ENCODE measurements at regions of chr7 and their contacts with region 1.

Region 1: DNA sequence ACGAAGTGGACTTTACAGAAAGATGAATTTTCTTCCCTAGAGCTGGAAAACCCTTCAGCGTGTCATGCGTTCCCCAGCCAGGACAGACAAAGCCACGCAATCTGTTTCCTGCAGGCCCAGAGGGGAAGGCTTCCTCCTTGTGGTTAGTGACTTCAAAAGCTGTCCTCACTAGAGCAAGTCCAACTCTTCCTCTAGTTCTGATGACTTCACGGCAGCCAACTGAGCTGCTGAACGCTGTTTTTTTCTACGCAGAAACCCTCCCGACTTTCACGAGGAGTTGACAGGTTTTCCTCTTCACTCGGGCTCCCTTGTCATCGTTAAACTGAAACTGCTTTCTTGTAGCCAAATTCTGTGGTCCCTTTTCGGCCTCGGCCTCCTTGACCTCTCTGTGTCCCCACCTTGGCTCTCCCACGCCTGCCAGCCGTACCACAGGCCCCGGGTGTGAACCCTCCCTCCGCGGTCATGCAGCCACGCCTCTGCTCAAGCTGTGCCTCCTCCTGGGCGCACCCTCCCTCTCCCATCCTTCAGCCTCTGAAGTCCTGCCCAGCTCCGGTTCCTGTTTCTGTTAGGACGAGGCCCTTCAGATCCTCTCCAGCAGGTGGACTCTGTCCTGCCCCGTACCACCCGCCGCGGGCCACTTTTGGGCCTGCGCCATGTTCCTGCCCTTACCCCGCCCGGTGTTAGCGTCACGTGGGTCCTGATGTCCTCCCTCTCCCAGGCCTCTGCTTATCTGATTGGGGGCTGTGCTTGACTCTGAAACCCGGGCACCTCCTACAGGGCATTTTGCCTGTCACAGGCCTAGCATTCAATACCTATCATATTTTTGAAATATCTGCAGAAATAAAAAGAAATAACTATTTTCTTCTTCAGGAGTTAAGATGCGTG is 39.3 kb downstream of the CUX1 start:
- DNase-seq: peak; percentile 95
- ATAC-seq: peak; percentile 96
- H3K4me3 ChIP-seq: peak overlapping the region; percentile 33; the same call in 1 of the 2 replicates
- H3K27ac ChIP-seq: peak overlapping the region; percentile 84
- H3K4me1 ChIP-seq: peaks cover 47% of the 10 kb centered on the region
- H3K27me3 ChIP-seq: no peaks in the 10 kb centered on the region
- CTCF ChIP-seq: peak; percentile 31 to 53 (median 39); a peak in 5 of 6 replicates
- EP300 ChIP-seq: peak in 1 of 2 experiments; percentile 72; a peak in 1 of 4 replicates
- POLR2A ChIP-seq: peak; percentile 58
- RAD21 ChIP-seq: peak; percentile 29; the same call in 1 of the 2 replicates

Region 2: DNA sequence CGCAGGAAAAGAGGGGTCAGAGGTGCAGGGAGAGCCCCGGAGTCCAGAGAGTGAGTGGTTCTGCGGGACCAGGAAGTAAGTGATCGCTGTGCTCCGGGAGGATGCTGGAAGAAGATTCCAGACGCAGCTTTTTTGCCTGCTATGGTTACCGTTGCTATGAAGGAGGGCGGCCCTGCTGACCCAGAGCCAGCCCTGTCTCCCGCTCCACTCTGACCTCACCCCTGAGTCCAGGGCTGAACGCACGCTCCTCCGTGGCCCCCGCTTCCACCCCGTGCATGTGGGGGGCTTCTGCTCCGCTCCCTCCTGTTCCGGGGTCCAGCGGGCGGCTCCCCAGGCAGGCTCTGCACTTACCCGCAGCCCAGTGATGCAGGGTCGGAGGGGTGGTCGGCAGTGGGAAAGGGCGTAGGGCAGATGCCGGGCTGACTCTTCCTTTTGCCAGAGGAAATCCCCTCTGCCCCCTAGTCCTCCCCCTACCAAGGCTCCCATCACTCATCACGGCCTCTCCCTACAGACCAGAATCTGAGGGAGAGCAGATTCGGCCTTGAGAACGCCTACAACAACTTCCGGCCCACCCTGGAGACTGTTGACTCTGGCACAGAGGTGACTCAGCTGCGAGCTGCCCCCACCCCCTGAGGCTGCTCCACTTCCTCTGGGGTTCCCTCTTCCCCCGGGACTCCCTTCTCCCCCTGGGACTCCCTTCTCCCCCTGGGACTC is 839.5 kb before region 1 on chr7:
- CTCF ChIA-PET with region 1: no interaction called
- POLR2A ChIA-PET with region 1: no interaction called
- RAD21 ChIA-PET with region 1: no interaction called
- SMC1A ChIA-PET with region 1: no interaction called
- in situ Hi-C with region 1: no loop called
- intact Hi-C with region 1: no loop called
- DNase-seq: peak; percentile 36
- ATAC-seq: peak; percentile 92
- H3K4me3 ChIP-seq: peak overlapping the region; percentile 95
- H3K27ac ChIP-seq: peak overlapping the region; percentile 91
- H3K4me1 ChIP-seq: peaks cover 15% of the 10 kb centered on the region
- H3K27me3 ChIP-seq: no peaks in the 10 kb centered on the region
- CTCF ChIP-seq: no peak
- EP300 ChIP-seq: no peak
- POLR2A ChIP-seq: peak; percentile 72
- RAD21 ChIP-seq: no peak

Region 3: GRCh38 chr7:101688183-101688831 is 168.4 kb before region 1 on chr7:
- CTCF ChIA-PET with region 1: no interaction called
- POLR2A ChIA-PET with region 1: no interaction called
- RAD21 ChIA-PET with region 1: no interaction called
- SMC1A ChIA-PET with region 1: no interaction called
- in situ Hi-C with region 1: no loop called
- intact Hi-C with region 1: loop called (anchors 1 kb)
- DNase-seq: no peak
- ATAC-seq: peak; percentile 97
- H3K4me3 ChIP-seq: peak overlapping the region; percentile 32; the same call in 1 of the 2 replicates
- H3K27ac ChIP-seq: peak overlapping the region; percentile 58
- H3K4me1 ChIP-seq: peaks cover 6% of the 10 kb centered on the region; the same call in 1 of the 2 replicates
- H3K27me3 ChIP-seq: no peaks in the 10 kb centered on the region
- CTCF ChIP-seq: peak; percentile 73 to 97 (median 79)
- EP300 ChIP-seq: no peak
- POLR2A ChIP-seq: no peak
- RAD21 ChIP-seq: peak; percentile 89

Region 4: DNA sequence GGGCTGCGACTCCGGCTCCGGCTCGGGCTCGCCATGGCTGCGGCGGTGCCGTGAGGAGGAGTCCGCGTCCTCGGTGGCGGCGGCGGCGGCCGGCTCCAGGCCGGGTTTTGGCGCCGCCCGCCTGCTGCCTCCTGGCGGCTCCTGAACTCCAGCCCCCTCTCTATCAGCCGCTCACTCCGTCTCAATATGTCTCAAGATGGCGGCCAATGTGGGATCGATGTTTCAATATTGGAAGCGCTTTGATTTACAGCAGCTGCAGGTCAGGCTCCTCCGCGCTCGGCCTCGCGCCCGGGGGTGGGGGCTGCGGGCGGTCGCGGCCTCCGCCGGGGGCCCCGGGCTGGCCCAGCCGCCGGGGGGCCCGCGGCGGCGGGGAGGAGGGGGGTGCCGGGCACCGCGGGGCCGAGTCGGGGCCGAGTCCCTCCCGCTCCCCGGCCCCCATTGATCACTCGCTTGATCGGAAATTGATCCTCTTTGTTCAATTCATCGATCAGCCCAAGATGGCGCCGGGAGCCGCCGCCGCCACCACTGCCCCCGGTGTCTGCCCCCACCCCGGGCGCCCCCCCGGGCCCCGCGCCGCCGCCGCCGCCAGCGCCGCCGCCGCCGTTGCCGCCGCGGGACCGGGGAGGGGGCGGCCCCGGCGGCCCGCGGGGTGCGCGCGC is 40.8 kb before region 1 on chr7:
- CTCF ChIA-PET with region 1: interaction called, 14 read pairs
- POLR2A ChIA-PET with region 1: interaction called, 3 read pairs
- RAD21 ChIA-PET with region 1: interaction called, 17 read pairs
- SMC1A ChIA-PET with region 1: interaction called, 27 read pairs
- in situ Hi-C with region 1: no loop called
- intact Hi-C with region 1: loop called (anchors 2 kb)
- DNase-seq: no peak
- ATAC-seq: peak; percentile 63
- H3K4me3 ChIP-seq: peak overlapping the region; percentile 53; the same call in 1 of the 2 replicates
- H3K27ac ChIP-seq: peak overlapping the region; percentile 68
- H3K4me1 ChIP-seq: peaks cover 4% of the 10 kb centered on the region; the same call in 1 of the 2 replicates
- H3K27me3 ChIP-seq: no peaks in the 10 kb centered on the region
- CTCF ChIP-seq: peak in 1 of 3 experiments; percentile 19; a peak in 2 of 6 replicates
- EP300 ChIP-seq: no peak
- POLR2A ChIP-seq: peak; percentile 69
- RAD21 ChIP-seq: no peak

Region 5: GRCh38 chr7:101941481-101942383 is 85.0 kb after region 1 on chr7:
- CTCF ChIA-PET with region 1: interaction called, 4 read pairs
- POLR2A ChIA-PET with region 1: interaction called, 3 read pairs
- RAD21 ChIA-PET with region 1: interaction called, 3 read pairs
- SMC1A ChIA-PET with region 1: interaction called, 12 read pairs
- in situ Hi-C with region 1: no loop called
- intact Hi-C with region 1: no loop called
- DNase-seq: no peak
- ATAC-seq: peak; percentile 27
- H3K4me3 ChIP-seq: no peak overlapping the region
- H3K27ac ChIP-seq: peak overlapping the region; percentile 1; the same call in 1 of the 2 replicates
- H3K4me1 ChIP-seq: peaks cover 38% of the 10 kb centered on the region
- H3K27me3 ChIP-seq: no peaks in the 10 kb centered on the region
- CTCF ChIP-seq: no peak
- EP300 ChIP-seq: no peak
- POLR2A ChIP-seq: no peak
- RAD21 ChIP-seq: 0 out of 2 replicates have a peak, but pooled peaks have one; percentile 2

Region 6: DNA sequence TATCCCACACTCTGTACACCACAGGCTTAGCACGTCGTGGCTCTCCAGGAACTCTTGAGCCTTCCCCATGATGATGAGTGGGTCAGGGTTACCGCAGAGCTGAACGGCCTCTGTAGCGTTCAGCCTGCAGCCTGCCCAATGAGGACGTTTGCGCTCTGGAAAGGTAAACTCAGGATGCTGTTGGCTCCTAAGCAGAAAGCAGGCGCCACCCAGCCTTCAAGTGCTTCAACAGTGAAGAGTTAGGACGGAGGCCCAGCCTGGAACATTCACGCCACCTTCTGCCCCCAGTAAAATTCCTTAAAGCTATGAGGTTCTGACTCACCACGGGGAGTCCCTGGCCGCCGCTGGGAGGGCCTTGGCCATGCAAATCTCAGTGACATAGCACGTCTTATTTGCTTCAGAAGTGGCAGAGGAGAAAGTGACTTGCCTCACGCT is 268.4 kb after region 1 on chr7:
- CTCF ChIA-PET with region 1: interaction called, 5 read pairs
- POLR2A ChIA-PET with region 1: interaction called, 3 read pairs
- RAD21 ChIA-PET with region 1: interaction called, 4 read pairs
- SMC1A ChIA-PET with region 1: interaction called, 6 read pairs
- in situ Hi-C with region 1: no loop called
- intact Hi-C with region 1: loop called (anchors 10 kb)
- DNase-seq: peak; percentile 51
- ATAC-seq: peak; percentile 94
- H3K4me3 ChIP-seq: no peak overlapping the region
- H3K27ac ChIP-seq: peak overlapping the region; percentile 4; the same call in 1 of the 2 replicates
- H3K4me1 ChIP-seq: peaks cover 26% of the 10 kb centered on the region
- H3K27me3 ChIP-seq: no peaks in the 10 kb centered on the region
- CTCF ChIP-seq: peak in 2 of 3 experiments; percentile 21 to 79; a peak in 3 of 6 replicates
- EP300 ChIP-seq: no peak
- POLR2A ChIP-seq: no peak
- RAD21 ChIP-seq: peak; percentile 58

Region 7: DNA sequence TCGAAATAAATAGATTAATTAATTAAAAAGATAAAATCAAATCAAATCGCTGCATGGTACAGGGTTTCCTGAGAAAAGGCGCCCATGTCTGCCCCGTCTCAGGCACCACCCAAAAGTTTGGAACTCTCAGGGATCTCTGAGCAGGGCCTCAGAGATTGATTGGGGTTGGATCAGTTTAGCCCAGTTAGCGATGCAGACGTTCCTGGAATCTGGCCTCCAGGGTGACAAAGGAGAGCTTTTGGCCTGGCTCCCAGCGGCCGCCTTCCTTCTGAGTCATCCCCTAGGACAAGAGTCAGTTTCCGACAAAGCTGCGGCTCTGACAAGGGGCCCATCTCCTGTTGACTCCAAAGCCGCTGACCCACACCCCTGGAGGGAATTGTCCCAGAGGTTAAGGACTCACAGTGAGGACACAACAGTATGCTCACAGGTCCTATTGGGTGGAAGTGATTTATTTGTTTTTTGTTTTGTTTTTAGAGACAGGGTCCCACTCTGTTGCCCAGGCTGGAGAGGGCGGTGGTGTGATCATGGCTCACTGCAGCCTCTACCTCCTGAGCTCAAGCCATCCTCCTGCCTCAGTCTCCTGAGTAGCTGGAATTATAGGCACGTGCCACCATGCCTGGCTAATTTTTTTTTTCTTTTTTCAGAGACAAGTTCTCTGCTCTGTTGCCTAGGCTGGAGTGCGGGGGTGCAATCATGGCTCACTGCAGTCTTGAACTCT is 583.5 kb after region 1 on chr7:
- CTCF ChIA-PET with region 1: no interaction called
- POLR2A ChIA-PET with region 1: no interaction called
- RAD21 ChIA-PET with region 1: no interaction called
- SMC1A ChIA-PET with region 1: no interaction called
- in situ Hi-C with region 1: no loop called
- intact Hi-C with region 1: loop called (anchors 5 kb)
- DNase-seq: no peak
- ATAC-seq: no peak
- H3K4me3 ChIP-seq: no peak overlapping the region
- H3K27ac ChIP-seq: peak overlapping the region; percentile 99; the same call in 1 of the 2 replicates
- H3K4me1 ChIP-seq: peaks cover 44% of the 10 kb centered on the region
- H3K27me3 ChIP-seq: no peaks in the 10 kb centered on the region
- CTCF ChIP-seq: no peak
- EP300 ChIP-seq: no peak
- POLR2A ChIP-seq: no peak
- RAD21 ChIP-seq: no peak